ENCODE measurements at regions of chrX and their contacts with region 1.

Region 1: DNA sequence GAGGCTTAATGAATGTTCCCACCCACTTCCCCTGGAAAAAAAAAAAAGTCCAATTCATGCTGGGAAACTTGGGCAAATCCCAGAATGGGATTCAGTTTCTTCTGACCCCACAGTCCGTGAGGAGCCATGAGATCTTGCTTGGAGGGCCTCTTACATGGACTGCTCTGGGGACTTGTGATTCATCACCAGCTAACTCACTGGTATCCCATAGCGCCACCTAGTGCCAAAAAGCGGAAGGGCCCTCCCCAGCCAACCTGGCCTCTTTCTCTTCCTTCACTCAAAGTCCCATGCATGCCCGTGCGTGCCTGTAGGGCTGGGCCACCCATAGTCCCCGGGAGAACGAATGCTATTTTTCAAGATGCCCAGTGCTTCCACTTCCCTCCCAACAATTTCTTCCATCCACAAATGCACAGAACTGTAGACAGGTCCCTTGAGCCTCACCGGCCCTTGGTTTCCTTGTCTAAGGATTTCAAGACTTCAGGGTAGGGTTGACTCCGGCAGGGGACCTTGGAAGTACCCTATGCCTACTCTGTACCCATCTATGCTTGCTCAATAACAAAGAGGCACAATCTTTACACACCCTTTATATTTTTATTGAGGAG is 5.1 kb downstream of the RTL5 start:
- DNase-seq: peak; percentile 67 to 84 (median 72)
- H3K4me3 ChIP-seq: no peak overlapping the region
- H3K4me3 Mint-ChIP-seq: peak overlapping the region in 4 of 7 donors; percentile 2 to 46 (median 32)
- H3K27ac ChIP-seq: no peak overlapping the region
- H3K27ac Mint-ChIP-seq: peak overlapping the region; percentile 43 to 90 (median 79)
- H3K4me1 ChIP-seq: peaks cover 30% of the 10 kb centered on the region
- H3K4me1 Mint-ChIP-seq: peaks cover 48 to 52% (median 51%) of the 10 kb centered on the region in 3 donors
- H3K27me3 ChIP-seq: no peaks in the 10 kb centered on the region
- H3K27me3 Mint-ChIP-seq: peaks cover 0 to 13% of the 10 kb centered on the region in 2 donors

Region 2: DNA sequence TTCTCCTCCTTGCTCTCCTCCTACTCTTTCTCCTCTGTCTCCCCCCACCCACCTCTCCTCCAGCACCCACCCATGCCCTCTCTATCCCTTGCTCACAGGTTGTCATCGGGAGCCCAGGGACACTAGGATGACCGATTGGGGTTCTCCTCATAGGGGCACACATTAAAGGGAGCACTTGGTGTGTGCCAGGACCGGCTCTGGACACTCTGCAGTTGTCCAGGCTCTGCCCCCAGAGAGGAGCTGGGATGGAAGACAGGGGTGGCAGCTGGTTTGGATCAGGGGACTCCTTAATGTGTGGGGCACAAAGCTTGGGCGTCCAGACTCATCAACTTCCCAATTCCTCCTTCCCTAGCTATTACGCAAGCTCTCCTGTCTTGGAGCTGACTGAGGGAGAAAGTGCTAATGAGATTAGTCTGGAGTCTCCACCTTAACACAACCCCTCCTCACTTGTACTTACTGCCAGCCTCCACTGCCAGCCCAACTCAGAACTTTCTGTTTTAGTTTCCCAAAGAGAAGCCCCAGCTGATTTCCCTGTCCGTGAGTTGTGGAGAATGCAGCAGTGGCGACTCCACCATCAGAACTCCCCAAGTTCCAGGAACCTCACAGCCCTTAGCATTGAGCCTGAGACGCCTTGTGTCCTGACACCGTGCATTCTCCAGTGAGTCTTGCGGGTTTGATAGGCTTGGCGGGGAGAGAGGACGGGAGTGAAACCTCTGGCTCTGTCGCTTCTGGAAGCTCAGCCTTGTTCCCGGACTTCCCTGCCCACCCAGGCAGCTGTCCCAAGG is 311.3 kb before region 1 on chrX:
- CTCF ChIA-PET with region 1: no interaction called
- POLR2A ChIA-PET with region 1: no interaction called
- DNase-seq: no peak
- H3K4me3 ChIP-seq: no peak overlapping the region
- H3K4me3 Mint-ChIP-seq: no peak overlapping the region
- H3K27ac ChIP-seq: no peak overlapping the region
- H3K27ac Mint-ChIP-seq: no peak overlapping the region
- H3K4me1 ChIP-seq: no peaks in the 10 kb centered on the region
- H3K4me1 Mint-ChIP-seq: no peaks in the 10 kb centered on the region
- H3K27me3 ChIP-seq: no peaks in the 10 kb centered on the region
- H3K27me3 Mint-ChIP-seq: peaks cover 11 to 20% of the 10 kb centered on the region in 2 donors

Region 3: DNA sequence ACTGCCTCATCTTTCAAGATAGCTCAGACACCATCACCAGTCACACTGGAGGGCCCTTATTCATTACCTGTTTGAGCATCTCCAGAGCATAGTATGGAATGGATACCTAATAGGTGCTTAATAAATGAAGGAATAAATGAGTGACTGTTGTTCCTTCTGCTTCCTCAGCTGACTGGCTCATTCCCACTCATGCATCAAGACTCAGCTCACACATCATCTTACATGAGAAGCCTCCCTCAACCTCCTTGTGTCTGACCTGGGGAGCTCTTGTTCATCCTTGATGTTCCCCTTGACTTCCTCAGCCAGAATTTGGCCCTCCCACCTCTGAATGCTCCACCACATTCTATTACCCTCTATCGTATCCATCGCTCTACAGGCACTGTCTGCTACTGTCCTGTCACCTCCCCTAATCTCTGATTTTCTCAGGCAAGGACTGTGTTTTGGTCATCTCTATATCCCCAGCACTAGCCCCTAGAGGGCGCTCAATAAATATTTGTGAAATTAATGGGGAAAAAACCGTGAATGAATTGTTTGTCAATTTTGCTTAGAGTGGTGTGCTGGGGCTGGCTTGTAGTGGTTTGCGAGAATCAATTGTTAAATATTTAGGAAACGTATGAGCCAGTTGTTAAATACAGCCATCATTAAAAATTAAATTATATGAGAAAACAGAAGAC is 127.7 kb before region 1 on chrX:
- CTCF ChIA-PET with region 1: interaction called, 34 read pairs
- POLR2A ChIA-PET with region 1: interaction called, 5 read pairs
- DNase-seq: peak; percentile 1 to 48 (median 17)
- H3K4me3 ChIP-seq: no peak overlapping the region
- H3K4me3 Mint-ChIP-seq: peak overlapping the region in 1 of 7 donors; percentile 49
- H3K27ac ChIP-seq: no peak overlapping the region
- H3K27ac Mint-ChIP-seq: peak overlapping the region in 2 of 8 donors; percentile 17 to 40
- H3K4me1 ChIP-seq: peaks cover under 1% of the 10 kb centered on the region
- H3K4me1 Mint-ChIP-seq: peaks cover 7 to 19% (median 9%) of the 10 kb centered on the region in 3 donors
- H3K27me3 ChIP-seq: no peaks in the 10 kb centered on the region
- H3K27me3 Mint-ChIP-seq: peaks cover 5 to 16% of the 10 kb centered on the region in 2 donors

Region 4: DNA sequence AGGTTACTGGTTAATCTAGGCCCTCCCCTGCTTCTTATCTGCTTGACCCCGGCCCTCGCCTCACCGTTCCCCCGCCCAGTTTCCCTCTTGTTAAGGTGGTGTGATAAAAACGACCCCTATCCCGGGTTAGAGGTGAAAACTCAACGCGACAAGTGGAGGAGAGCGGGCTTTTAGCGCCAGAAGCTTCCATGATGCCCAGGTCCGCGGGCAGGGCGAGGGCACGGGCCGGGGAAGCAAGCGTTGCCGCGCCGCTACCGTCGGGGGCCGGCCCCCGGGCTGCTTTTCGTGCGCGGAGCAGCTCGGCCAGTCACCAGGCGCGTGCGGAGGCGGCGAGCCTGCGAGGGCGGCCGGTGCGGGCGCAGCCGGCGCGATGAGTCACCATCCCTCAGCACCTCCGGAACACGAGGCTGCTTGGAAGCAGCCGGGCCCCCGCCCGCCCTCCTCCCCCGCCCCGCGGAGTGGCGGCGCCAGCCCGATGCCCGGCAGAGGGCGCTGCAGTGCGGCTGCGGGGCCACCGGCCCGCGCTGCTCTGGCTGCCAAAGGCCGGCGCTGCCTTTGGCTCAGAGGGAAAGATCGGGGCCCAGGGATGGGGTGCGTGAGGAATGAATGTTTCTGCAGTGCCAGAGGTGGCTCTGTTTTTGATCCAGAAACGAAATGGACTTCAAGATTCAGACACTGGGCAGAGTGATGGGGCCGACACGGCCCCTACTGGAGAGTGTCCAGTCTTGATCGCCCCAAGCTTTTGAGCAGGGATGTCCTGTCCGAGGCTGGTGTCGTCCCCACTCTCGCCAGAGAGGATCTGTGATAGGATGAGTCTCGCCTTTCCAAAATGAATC is 108.1 kb before region 1 on chrX:
- CTCF ChIA-PET with region 1: interaction called, 135 read pairs
- POLR2A ChIA-PET with region 1: interaction called, 3 read pairs
- DNase-seq: peak; percentile 69 to 89 (median 77)
- H3K4me3 ChIP-seq: no peak overlapping the region
- H3K4me3 Mint-ChIP-seq: peak overlapping the region in 4 of 7 donors; percentile 5 to 70 (median 22)
- H3K27ac ChIP-seq: no peak overlapping the region
- H3K27ac Mint-ChIP-seq: peak overlapping the region in 5 of 8 donors; percentile 12 to 69 (median 44)
- H3K4me1 ChIP-seq: peaks cover 5% of the 10 kb centered on the region
- H3K4me1 Mint-ChIP-seq: peaks cover 7 to 23% (median 11%) of the 10 kb centered on the region in 3 donors
- H3K27me3 ChIP-seq: no peaks in the 10 kb centered on the region
- H3K27me3 Mint-ChIP-seq: peaks cover 0 to 22% of the 10 kb centered on the region in 2 donors

Region 5: DNA sequence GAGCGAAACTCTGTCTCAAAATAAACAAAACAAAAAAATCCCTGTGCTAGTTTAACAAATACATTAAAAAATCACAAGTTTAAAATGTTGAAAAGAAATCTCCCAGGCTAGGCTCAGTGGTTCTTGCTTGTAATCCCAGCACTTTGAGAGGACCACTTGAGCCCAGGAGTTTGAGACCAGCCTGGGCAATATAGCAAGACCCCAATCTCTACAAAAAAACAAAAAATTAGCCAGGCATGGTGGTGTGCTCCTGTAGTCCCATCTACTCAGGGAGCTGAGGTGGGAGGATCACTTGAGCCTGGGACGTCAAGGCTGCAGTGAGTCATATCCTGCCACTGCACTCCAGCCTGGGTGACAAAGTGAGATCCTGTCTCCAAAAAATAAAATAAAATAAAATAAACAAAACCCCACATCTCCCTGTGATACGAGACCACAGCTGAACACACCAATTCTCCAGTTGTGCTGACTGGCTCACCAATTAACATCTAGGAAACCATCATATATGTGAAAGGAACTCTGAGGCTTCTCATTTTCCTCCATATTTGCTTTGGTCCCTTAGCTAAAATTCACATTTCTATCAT is 143.1 kb after region 1 on chrX:
- CTCF ChIA-PET with region 1: no interaction called
- POLR2A ChIA-PET with region 1: interaction called, 10 read pairs
- DNase-seq: peak in 1 of 5 donors; percentile 50
- H3K4me3 ChIP-seq: no peak overlapping the region
- H3K4me3 Mint-ChIP-seq: no peak overlapping the region
- H3K27ac ChIP-seq: no peak overlapping the region
- H3K27ac Mint-ChIP-seq: peak overlapping the region in 7 of 8 donors; percentile 51 to 86 (median 81)
- H3K4me1 ChIP-seq: peaks cover 17% of the 10 kb centered on the region
- H3K4me1 Mint-ChIP-seq: peaks cover 37 to 43% (median 43%) of the 10 kb centered on the region in 3 donors
- H3K27me3 ChIP-seq: no peaks in the 10 kb centered on the region
- H3K27me3 Mint-ChIP-seq: peaks cover 0 to 1% of the 10 kb centered on the region in 2 donors

Measured in CD8-positive, alpha-beta memory T cell (primary cell).